AG04450 (cell line): ENCODE measurements at regions of chr2 and their contacts with region 1.

Region 1: GRCh38 chr2:109324861-109325260 is 195.9 kb downstream of the SH3RF3 start:
- DNase-seq: peak; percentile 92
- H3K4me3 ChIP-seq: no peak overlapping the region
- H3K27ac ChIP-seq: peak overlapping the region; percentile 72
- H3K27me3 ChIP-seq: no peaks in the 10 kb centered on the region
- CTCF ChIP-seq: no peak

Region 2: DNA sequence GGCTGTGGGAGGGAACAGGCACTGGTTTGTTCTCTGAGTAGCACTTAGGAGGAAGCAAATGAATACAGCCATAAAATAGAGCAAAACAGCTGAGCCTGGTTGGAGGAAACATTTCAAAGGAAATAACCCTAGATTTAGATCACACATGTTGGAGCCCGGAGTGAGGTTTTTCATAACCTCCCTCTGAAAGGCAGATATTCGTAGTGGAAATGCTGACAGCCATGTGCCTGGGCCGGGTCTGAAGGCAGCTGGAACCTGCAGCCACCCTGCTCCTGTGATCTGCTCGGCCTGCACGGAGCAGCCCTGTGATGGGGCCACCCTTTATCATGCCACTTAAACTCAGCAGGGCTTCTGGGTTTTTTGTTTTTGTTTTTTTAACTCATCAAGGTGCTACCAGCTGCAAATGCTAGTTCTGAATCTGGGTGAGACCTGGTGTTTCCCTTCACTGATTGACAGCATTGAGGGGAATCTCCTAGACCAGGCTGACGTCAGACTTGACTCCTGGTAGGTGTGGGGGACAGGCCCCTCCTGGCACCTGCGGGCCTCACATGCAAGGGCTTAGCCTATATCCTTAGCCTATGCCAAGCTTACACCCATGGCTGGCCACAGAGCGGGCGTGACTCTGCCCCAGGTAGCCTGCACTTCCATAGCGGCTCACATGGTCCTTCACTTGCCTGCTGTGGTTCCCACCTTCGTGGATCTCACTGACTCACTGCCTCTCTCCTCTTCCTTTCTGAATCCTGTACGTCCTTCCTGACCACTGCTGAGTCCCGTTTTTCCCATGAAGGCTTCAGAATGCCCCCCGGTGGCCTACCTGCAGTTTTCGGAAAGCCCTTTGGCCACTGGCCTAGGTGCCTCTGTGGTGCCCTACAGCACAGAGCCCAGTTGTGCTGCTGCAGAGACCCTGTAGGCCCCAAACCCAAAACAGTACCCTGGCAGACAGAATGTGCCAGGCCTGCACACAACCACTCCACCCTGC is 71.6 kb after region 1 on chr2:
- CTCF ChIA-PET with region 1: no interaction called
- POLR2A ChIA-PET with region 1: no interaction called
- DNase-seq: no peak
- H3K4me3 ChIP-seq: no peak overlapping the region
- H3K27ac ChIP-seq: no peak overlapping the region
- H3K27me3 ChIP-seq: no peaks in the 10 kb centered on the region
- CTCF ChIP-seq: 0 out of 2 replicates have a peak, but pooled peaks have one; percentile 1

Region 3: DNA sequence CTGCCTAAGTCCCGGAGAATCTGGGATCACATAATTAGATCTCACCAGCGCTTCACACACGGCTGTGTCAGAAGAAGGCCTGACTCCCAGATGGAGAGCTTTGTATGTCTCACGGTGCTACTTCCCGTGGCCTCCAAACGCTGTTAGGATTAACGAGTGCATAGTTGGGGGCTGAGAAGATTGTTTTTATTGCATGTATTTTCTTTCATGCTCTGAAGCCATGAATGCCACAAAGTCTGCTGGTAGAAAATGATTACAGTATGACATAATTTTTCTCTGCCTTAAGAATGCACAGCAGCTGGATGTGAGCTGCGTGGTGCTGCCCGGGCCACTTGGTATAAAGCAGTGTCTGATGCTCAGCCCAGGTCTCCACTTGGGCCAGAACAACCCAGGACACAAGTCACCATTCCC is 122.4 kb after region 1 on chr2:
- CTCF ChIA-PET with region 1: no interaction called
- POLR2A ChIA-PET with region 1: interaction called, 11 read pairs
- DNase-seq: peak; percentile 93
- H3K4me3 ChIP-seq: no peak overlapping the region
- H3K27ac ChIP-seq: peak overlapping the region; percentile 96
- H3K27me3 ChIP-seq: no peaks in the 10 kb centered on the region
- CTCF ChIP-seq: no peak

Region 4: DNA sequence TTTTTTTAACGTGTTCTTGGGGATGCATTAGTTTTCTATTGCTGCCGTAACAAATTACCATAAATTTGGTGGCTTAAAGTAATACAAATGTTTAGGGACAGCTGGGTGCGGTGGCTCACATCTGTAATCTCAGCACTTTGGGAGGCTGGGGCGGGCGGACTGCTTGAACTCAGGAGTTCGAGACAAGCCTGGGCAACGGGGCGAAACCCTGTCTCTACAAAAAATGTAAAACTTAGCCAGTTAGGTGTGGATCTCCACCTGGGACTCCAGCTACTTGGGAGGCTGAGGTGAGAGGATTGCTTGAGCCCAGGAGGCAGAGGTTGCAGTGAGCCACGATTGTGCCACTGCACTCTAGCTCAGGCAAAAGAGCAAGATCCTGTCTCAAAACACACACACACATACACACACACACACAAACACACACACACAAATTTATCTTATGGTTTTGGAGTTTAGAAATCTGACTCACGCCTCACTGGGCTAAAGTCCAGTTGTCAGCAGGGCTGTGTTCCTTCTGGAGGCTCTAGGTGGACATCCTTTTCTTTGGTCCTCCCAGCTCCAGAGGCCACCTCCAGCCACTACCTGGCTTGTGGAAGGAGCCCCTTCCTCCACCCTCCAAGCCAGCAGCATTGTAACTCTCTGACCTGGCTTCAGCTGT is 212.8 kb after region 1 on chr2:
- CTCF ChIA-PET with region 1: no interaction called
- POLR2A ChIA-PET with region 1: interaction called, 13 read pairs
- DNase-seq: no peak
- H3K4me3 ChIP-seq: no peak overlapping the region
- H3K27ac ChIP-seq: no peak overlapping the region
- H3K27me3 ChIP-seq: peaks cover 4% of the 10 kb centered on the region
- CTCF ChIP-seq: no peak